IMR-90 (cell line): ENCODE measurements at regions of chr15 and their contacts with region 1.

Region 1: DNA sequence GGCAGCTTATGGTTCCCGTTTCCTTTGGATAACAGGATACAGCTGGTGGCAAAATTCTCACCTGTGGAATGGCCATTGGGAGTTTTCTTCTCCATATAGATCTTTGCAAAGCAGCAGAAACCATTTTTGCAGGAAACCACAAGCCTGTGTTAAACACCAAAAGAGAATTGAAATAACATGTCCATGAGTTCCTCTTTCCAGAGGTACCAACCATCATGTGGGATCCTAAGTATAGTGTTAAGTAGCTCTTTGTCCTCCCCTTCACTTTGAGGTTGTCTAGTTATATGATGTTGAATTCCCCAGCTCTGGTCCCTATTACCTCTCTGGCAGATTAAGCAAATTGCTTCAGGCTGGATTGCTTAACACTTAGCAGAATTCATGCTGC is 94.9 kb downstream of the AKAP13 start:
- DNase-seq: no peak
- ATAC-seq: no peak
- H3K4me3 ChIP-seq: no peak overlapping the region
- H3K27ac ChIP-seq: no peak overlapping the region
- H3K4me1 ChIP-seq: peaks cover 19% of the 10 kb centered on the region
- H3K27me3 ChIP-seq: no peaks in the 10 kb centered on the region
- CTCF ChIP-seq: no peak
- POLR2A ChIP-seq: no peak
- RAD21 ChIP-seq: no peak

Region 2: GRCh38 chr15:85419161-85419560 is 56.1 kb before region 1 on chr15:
- CTCF ChIA-PET with region 1: no interaction called
- POLR2A ChIA-PET with region 1: no interaction called
- dilution Hi-C with region 1: no loop called
- in situ Hi-C with region 1: no loop called
- intact Hi-C with region 1: loop called (anchors 5 kb)
- DNase-seq: peak; percentile 41
- ATAC-seq: peak; percentile 29
- H3K4me3 ChIP-seq: no peak overlapping the region
- H3K27ac ChIP-seq: no peak overlapping the region
- H3K4me1 ChIP-seq: peaks cover 12% of the 10 kb centered on the region; the same call in 1 of the 2 replicates
- H3K27me3 ChIP-seq: no peaks in the 10 kb centered on the region
- CTCF ChIP-seq: no peak
- POLR2A ChIP-seq: no peak
- RAD21 ChIP-seq: no peak

Region 3: GRCh38 chr15:85649372-85649771 is 174.1 kb after region 1 on chr15:
- CTCF ChIA-PET with region 1: no interaction called
- POLR2A ChIA-PET with region 1: no interaction called
- dilution Hi-C with region 1: no loop called
- in situ Hi-C with region 1: no loop called
- intact Hi-C with region 1: no loop called
- DNase-seq: peak; percentile 90
- ATAC-seq: peak; percentile 76
- H3K4me3 ChIP-seq: no peak overlapping the region
- H3K27ac ChIP-seq: peak overlapping the region; percentile 36; the same call in 1 of the 2 replicates
- H3K4me1 ChIP-seq: peaks cover 12% of the 10 kb centered on the region
- H3K27me3 ChIP-seq: no peaks in the 10 kb centered on the region
- CTCF ChIP-seq: no peak
- POLR2A ChIP-seq: no peak
- RAD21 ChIP-seq: no peak

Region 4: GRCh38 chr15:87369269-87369668 is 1894.0 kb after region 1 on chr15:
- CTCF ChIA-PET with region 1: no interaction called
- POLR2A ChIA-PET with region 1: no interaction called
- dilution Hi-C with region 1: no loop called
- in situ Hi-C with region 1: no loop called
- intact Hi-C with region 1: loop called (anchors 5 kb)
- DNase-seq: peak; percentile 93
- ATAC-seq: peak; percentile 89
- H3K4me3 ChIP-seq: no peak overlapping the region
- H3K27ac ChIP-seq: no peak overlapping the region
- H3K4me1 ChIP-seq: peaks cover 6% of the 10 kb centered on the region
- H3K27me3 ChIP-seq: no peaks in the 10 kb centered on the region
- CTCF ChIP-seq: no peak
- POLR2A ChIP-seq: no peak
- RAD21 ChIP-seq: no peak